ENCODE measurements at regions of chr18 and their contacts with region 1.

Region 1: DNA sequence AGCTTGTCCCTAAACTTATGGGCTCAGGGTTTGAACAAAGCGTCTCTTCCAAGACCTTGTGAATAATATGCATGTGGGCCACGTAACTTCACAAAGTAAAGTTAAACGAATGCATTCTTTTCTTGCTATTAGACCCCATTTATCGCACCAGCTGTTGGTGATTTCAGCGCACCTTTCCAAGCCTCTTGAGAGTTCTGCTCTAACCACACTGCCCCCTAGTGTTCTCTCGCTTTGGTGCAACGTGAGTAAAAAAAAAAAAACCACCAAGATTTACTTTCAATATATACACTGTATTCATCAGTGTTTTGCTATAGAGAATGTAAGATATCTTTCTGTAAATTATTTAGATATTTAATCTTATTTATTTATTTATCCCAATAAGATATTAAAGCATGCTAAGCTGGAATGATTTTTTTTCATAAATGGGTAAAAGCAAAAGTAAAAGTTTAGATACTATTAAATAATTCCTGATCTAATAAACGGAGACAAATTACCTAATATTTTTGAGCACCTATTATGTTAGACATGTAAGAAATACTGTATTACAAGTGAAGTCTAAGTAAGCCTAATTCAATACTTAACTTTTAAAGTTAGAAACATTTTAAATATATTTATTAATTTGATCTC is 459.5 kb downstream of the DLGAP1 start:
- DNase-seq: peak; percentile 56
- H3K4me3 ChIP-seq: no peak overlapping the region
- H3K27ac ChIP-seq: no peak overlapping the region
- H3K4me1 ChIP-seq: no peaks in the 10 kb centered on the region
- H3K27me3 ChIP-seq: no peaks in the 10 kb centered on the region
- CTCF ChIP-seq: peak; percentile 59 to 89 (median 81)
- EP300 ChIP-seq: no peak
- POLR2A ChIP-seq: no peak

Region 2: DNA sequence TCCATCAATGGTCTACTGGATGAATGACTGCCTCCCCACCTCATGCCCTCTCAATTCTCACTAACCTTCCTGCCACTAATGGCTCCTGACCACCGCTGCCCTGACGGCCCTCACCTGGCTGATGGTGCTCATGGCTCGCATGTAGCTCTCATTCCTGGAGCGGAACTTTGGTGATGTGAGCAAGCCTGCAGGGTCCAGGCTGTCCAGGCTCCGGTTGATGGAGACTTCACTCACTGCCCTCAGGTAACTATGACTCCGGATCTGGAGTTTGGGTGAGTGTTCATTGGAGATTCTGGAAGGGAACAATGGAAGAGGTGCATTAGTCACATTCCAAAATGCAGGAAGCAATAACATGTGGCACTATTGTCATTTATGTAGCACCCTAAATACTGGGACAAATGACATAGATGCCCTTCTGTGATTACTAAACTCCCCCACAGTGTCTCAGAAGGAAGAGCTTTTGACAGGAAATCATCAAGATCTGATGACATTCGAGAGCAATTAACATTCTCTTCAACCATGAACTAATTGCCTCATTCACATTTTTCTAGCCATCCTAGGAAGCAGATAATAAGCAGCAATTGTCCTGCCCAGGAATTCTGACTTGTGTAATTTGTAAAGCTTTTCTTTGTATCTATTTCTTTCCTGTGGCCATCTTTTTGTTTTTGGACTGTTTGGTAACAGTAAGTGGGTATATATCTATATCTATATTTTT is 253.2 kb before region 1 on chr18:
- in situ Hi-C with region 1: no loop called
- intact Hi-C with region 1: no loop called
- DNase-seq: no peak
- H3K4me3 ChIP-seq: no peak overlapping the region
- H3K27ac ChIP-seq: no peak overlapping the region
- H3K4me1 ChIP-seq: no peaks in the 10 kb centered on the region
- H3K27me3 ChIP-seq: no peaks in the 10 kb centered on the region
- CTCF ChIP-seq: no peak
- EP300 ChIP-seq: no peak
- POLR2A ChIP-seq: no peak

Region 3: GRCh38 chr18:3771121-3771971 is 224.2 kb before region 1 on chr18:
- in situ Hi-C with region 1: loop called in 2 of 4 experiments (anchors 25 kb)
- intact Hi-C with region 1: no loop called
- DNase-seq: peak; percentile 85
- H3K4me3 ChIP-seq: peak overlapping the region in 3 of 4 donors; percentile 13 to 39 (median 15)
- H3K27ac ChIP-seq: peak overlapping the region; percentile 17 to 71 (median 50)
- H3K4me1 ChIP-seq: peaks cover 0 to 13% (median 6%) of the 10 kb centered on the region in 4 donors
- H3K27me3 ChIP-seq: peaks cover 2% of the 10 kb centered on the region
- CTCF ChIP-seq: peak; percentile 91 to 96 (median 96)
- EP300 ChIP-seq: no peak
- POLR2A ChIP-seq: no peak

Region 4: DNA sequence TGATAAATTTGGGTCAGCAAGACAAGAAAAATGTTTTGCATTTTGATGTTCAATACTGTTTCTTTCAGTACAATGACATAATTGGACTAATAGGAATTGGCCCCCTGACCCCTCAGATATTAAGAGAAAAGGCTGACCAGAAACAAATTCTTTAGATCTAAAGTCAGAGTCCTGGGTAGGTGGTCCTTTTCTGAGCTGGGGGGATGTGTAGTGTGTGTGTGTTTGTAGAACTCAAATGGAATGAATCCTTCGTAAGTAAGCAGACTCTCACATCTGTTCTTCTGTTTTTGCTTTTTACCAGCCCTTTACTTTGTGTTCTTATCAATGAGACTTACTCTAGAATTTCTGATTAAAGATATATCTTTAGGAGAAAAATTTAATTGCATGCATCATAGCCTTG is 217.9 kb before region 1 on chr18:
- in situ Hi-C with region 1: loop called in 2 of 4 experiments (anchors 25 kb)
- intact Hi-C with region 1: loop called (anchors 2 kb)
- DNase-seq: no peak
- H3K4me3 ChIP-seq: no peak overlapping the region
- H3K27ac ChIP-seq: no peak overlapping the region
- H3K4me1 ChIP-seq: peaks cover 0 to 7% (median 0%) of the 10 kb centered on the region in 4 donors
- H3K27me3 ChIP-seq: no peaks in the 10 kb centered on the region
- CTCF ChIP-seq: no peak
- EP300 ChIP-seq: no peak
- POLR2A ChIP-seq: no peak

Region 5: DNA sequence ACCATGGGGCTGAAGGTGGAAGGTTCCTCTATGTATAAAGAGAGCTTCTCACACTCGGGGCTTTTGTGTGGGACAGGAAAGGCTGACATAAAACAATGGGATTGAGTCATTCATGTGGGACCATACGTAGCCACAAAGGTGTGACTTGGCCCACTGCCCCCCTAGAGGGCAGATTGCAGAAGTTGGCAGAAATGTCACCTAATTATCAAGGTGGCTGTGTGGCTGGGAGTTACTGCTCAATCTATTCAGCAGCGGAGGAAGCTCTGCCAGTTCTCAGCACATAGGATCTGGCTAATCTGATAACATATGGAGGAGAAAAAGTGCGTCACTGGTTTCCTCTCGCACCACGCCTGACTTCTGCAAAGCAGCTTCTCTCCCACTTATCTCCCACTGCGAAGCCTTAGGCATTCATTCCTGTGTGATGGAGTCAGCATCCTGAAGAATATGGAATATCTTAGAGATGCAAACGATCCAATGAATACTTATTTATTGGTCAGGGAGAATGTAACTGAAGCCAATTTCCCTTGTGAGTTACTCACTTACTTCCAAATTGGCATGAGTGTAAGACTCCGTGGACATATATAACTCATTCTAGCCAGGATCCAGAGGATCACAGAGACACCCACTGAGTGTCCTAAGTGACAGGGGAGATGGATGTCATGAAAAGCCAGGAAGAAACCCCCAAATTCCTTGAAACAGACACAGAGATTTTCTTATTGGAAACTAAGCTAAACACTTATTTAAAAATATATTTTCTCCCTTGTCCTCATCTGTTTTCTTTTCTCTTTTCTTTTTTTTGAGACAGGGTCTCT is 200.8 kb before region 1 on chr18:
- in situ Hi-C with region 1: loop called in 1 of 4 experiments (anchors 25 kb)
- intact Hi-C with region 1: no loop called
- DNase-seq: no peak
- H3K4me3 ChIP-seq: no peak overlapping the region
- H3K27ac ChIP-seq: no peak overlapping the region
- H3K4me1 ChIP-seq: no peaks in the 10 kb centered on the region
- H3K27me3 ChIP-seq: no peaks in the 10 kb centered on the region
- CTCF ChIP-seq: no peak
- EP300 ChIP-seq: no peak
- POLR2A ChIP-seq: no peak

Measured in transverse colon (tissue), 4 donors.